GM13976 (cell line): ENCODE measurements at regions of chr18 and their contacts with region 1.

Region 1: DNA sequence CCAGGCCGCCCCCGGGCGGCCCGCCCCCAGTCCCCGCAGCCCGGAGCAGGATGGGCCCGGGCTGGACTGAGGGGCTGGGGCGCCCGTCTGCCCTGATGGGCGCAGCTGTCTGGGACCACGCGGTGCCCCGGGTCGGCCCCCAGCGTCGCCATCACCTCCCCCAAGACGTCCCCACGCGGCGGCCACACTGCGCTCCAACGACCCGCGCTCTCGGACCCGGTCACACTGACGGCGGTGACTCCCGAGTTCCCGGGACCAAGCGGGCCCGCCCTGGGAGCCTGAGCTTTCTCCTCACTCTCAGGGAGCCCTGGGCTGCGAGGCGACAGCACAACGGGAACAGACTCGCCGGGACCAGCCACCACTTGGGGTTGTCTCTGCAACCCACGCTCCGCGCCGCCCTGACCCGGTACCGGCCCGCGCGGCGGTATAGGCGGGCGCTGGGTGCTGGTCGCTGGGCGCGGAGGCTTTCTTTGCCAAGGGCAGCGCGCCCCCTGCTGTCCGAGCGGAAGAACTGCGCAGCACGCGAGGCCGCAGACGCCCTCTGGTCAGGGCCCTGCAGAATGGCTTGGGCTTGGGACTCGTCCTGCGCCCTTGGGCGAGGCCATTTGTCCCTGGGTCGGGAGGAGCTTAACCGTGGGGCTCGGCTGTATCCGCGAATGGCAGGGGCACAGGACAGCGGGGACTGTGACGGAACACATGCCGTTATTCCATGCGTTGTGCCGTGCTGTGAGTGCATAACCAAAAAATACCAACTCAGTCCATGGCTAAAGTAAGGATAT is 54.8 kb upstream of the ANKRD62 start:
- DNase-seq: peak; percentile 89
- CTCF ChIP-seq: peak; percentile 100

Region 2: DNA sequence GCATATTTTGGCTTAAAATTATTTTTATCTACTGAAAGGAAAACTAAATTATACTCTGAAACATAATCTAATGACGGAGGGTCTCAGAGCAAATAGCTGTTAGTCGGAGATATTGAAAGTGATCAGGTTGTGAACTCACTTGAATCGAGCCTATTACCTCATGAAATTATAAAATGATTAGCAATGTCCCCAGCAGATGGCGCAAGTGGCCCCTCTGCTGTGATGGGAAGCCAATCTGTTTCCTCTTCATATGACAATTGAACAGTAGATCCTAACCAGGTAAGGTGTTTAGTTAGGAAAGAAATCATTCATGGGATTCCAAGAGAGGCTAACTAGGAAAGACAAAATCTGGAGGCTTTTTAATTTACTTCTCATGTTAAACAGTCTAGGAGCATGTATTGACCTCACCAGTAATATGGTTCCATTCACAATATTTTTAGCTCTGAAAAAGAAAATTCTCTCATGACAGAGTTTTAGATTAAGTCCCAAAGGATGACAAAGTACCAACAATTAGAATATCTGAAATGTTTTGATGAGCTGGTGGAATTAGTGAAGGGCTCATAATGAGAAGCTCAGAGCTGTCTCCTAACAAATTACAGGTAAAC is 100.9 kb before region 1 on chr18:
- in situ Hi-C with region 1: loop called (anchors 10 kb)
- DNase-seq: peak; percentile 83
- CTCF ChIP-seq: peak; percentile 57

Region 3: GRCh38 chr18:12408247-12408869 is 369.5 kb after region 1 on chr18:
- in situ Hi-C with region 1: no loop called
- DNase-seq: no peak
- CTCF ChIP-seq: no peak